Activated naive CD4-positive, alpha-beta T cell treated with anti-CD3 and anti-CD28 coated beads, Interleukin-2, amount 10 ng/mL, durations not matched to agents 7 days and 5 days (primary cell): ENCODE measurements at regions of chr3 and their contacts with region 1.

Region 1: DNA sequence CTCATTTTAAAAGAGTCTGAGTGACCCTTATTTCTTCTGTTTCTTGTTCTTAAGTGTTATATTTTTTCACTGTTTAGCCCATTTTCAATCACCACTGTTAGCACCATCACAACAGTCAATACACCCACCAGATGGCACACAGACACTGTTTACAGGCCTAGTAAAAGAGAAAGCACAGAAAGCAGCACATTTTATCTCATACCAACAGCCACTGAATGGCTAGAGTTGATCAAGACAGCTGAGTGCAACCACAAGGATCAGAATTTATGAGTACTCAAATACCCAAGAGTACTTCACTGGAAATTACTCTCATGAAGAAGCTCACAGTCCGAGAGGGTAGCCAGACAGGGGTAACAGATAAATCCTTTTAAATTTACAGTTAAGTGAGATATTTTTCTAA is 127.0 kb downstream of the TFDP2 start:
- DNase-seq: no peak
- H3K4me3 Mint-ChIP-seq: no peak overlapping the region
- H3K27ac Mint-ChIP-seq: no peak overlapping the region
- H3K4me1 Mint-ChIP-seq: peaks cover 25% of the 10 kb centered on the region
- H3K27me3 Mint-ChIP-seq: no peaks in the 10 kb centered on the region

Region 2: DNA sequence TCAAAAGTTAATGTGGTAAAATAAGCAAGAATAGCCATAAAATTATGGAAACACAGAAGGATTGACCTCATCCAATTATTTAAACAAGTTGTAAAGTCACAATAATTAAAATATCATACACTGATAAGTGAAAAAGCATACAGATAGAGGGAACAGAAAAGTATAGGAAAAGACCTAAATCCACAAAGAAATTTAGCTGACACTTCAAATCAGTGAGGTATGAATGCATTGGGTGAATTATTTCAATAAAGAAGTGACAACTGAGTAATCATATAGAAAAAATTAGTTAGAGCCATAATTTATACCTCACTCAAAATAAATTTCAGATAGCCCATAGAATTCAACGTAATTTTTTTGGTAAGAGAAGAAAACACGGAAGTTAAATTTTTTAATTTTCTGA is 101.9 kb after region 1 on chr3:
- CTCF ChIA-PET with region 1: interaction called, 11 read pairs
- DNase-seq: no peak
- H3K4me3 Mint-ChIP-seq: no peak overlapping the region
- H3K27ac Mint-ChIP-seq: no peak overlapping the region
- H3K4me1 Mint-ChIP-seq: no peaks in the 10 kb centered on the region
- H3K27me3 Mint-ChIP-seq: no peaks in the 10 kb centered on the region